Left ventricle myocardium inferior (tissue), 1 donor: ENCODE measurements at regions of chr20 and their contacts with region 1.

Region 1: DNA sequence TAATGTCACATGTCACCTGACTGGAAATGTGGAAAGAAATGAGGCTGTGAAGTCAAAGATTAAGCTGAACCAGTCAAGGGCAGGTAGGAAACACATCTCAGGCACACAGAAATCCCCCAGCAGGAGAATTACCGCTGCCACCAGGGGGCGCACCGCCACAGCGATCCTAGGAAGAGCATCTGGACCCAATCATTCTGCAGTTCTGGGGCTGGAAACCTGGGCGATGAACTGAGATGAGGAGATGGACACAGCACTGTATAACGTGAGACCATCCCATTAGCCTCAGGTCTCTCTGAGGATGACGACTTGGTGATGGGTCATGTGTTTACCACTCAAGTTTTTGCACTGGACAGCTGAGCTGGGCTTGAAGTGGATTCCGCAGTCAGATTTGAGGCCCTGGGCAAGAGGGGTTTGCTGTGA is 6.5 kb upstream of the SLC24A3 start:
- DNase-seq: peak; percentile 72
- H3K4me3 ChIP-seq: no peak overlapping the region
- H3K27ac ChIP-seq: no peak overlapping the region
- H3K4me1 ChIP-seq: peaks cover 4% of the 10 kb centered on the region
- H3K27me3 ChIP-seq: peaks cover 55% of the 10 kb centered on the region
- CTCF ChIP-seq: peak; percentile 93

Region 2: DNA sequence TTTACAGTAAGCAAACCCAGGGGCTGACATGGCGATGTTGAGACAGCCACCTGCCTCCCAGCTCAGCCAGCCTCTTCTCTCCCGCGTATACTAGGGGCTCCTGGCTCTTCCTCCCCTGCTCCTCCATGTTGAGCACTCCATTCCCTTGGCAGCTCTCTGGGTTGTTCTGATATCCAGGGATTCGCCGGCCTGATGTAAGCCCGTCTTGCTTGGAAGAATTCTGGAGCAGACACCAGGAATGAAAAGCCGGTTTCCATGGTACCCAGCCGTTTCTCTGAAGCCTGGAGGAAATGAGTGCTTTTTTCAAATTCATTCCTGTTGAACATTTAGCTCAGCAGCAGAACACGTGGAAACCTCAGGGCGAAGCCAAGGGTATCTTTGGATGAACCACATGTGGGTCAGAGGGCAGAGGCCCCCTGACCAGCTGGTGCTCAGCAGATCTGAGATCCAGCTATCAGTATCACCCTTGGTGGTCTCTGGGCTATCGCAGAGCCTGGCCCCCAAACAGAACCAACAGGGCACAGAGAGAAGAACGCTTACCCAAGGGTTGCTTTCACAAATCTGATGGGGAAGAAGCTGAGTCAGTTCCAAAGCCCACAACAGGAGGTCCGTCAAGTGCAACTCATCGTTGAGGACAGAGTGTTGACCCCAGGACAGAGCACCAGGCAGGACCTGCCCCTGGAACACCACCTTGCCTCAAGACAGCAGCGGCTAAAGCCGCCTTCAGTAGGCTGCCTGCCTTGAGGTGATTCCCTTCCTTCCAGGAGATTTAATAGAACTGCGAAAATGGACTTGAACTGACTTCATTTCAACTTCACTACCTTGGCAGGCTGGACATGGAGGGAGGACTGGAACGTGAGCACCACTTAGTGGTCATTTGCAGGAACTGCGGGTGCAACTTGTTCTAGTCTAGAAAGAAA is 456.0 kb after region 1 on chr20:
- intact Hi-C with region 1: loop called (anchors 5 kb)
- DNase-seq: peak; percentile 36
- H3K4me3 ChIP-seq: no peak overlapping the region
- H3K27ac ChIP-seq: no peak overlapping the region
- H3K4me1 ChIP-seq: peaks cover 4% of the 10 kb centered on the region
- H3K27me3 ChIP-seq: peaks cover 76% of the 10 kb centered on the region
- CTCF ChIP-seq: peak; percentile 100